CD4-positive, alpha-beta T cell (primary cell): ENCODE measurements at regions of chr20 and their contacts with region 1.

Region 1: DNA sequence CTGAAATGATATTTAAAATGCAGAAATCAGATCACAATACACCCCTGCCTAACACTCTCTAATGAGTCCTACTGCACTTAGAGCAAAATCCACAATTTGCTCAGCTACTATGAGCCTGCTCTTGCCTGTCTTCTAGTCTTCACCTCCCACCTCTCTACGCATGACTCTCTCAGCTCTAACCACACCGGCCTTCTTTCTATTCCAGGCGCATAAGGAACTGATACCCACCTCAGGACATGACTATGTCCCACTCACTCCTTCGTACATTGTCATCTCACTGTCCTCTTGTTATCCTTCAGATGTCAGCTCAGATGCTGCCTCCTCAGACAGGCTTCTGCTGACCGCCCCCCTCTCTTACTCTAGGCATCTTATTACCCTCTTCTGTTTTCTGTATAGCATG is 201.0 kb upstream of the FLRT3 start:
- DNase-seq: no peak
- ATAC-seq: no peak
- H3K4me3 ChIP-seq: no peak overlapping the region
- H3K4me3 Mint-ChIP-seq: no peak overlapping the region
- H3K27ac ChIP-seq: no peak overlapping the region
- H3K27ac Mint-ChIP-seq: no peak overlapping the region
- H3K4me1 ChIP-seq: no peaks in the 10 kb centered on the region
- H3K4me1 Mint-ChIP-seq: no peaks in the 10 kb centered on the region
- H3K27me3 ChIP-seq: no peaks in the 10 kb centered on the region
- H3K27me3 Mint-ChIP-seq: no peaks in the 10 kb centered on the region
- CTCF ChIP-seq: no peak

Region 2: DNA sequence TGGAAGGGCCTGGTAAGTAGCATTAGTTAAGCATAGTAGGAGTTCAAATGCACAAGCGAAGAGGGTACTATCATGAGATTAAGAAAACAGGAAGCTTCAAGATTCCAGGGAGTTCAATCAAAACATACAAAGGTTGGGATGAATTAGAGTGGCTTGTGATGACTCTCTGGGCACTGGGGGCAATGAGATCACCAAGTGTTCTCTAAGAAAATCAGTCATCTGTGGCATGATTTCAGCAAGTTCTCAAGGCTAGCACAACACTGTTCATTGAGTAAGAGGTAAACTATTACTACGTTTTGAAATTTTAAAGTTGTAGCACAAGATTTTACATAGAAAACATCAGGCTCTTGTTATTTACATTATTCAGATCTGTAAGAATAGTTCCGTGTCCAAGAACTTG is 61.3 kb before region 1 on chr20:
- CTCF ChIA-PET with region 1: no interaction called
- POLR2A ChIA-PET with region 1: no interaction called
- intact Hi-C with region 1: loop called in 1 of 2 experiments (anchors 10 kb)
- DNase-seq: no peak
- ATAC-seq: no peak
- H3K4me3 ChIP-seq: no peak overlapping the region
- H3K4me3 Mint-ChIP-seq: no peak overlapping the region
- H3K27ac ChIP-seq: no peak overlapping the region
- H3K27ac Mint-ChIP-seq: no peak overlapping the region
- H3K4me1 ChIP-seq: no peaks in the 10 kb centered on the region
- H3K4me1 Mint-ChIP-seq: no peaks in the 10 kb centered on the region
- H3K27me3 ChIP-seq: no peaks in the 10 kb centered on the region
- H3K27me3 Mint-ChIP-seq: no peaks in the 10 kb centered on the region
- CTCF ChIP-seq: no peak